ENCODE measurements at regions of chr3 and their contacts with region 1.

Region 1: DNA sequence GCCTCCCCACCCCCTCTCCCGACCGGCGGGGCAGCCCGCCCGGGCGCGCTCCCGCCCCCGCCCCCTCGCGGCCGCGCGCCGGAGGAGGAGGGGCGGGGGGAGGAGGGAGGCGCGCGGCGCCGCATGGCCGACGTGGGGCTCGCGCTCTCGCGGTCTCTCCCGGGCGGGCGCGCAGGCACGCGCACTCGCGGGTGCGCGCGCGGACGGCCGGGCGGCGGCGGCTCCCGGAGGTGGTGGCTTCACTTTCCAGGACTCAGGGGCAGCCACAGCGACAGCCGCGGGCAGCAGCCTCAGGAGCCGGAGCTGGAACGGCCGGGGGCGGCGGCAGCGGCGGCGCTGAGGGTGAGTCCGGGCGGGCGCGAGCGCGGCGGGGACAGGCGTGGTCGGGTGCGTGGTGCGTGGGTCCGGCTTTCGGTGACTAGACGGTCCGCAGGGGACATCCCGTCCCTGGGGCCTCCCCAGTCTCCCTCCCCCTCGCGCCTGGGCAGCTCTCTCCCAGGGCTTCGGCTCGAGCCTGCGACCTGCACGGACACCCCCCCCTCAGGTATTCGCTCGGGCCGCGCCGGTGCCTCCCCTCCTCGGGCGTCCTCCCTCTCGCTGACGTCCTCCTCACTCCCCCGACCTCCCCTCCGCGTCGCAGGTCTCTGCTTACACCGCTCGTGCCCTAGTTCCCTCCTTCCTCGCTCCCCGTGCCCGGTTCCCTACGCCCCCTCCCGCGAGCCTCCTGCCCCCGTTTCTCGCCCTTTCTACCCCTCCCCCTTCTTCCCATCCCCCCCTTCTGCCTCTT is at the start of gene UBE2E2:
- DNase-seq: peak; percentile 62
- H3K4me3 ChIP-seq: peak within 1 kb of the TSS; percentile 87 to 100 (median 96)
- H3K27ac ChIP-seq: peak within 1 kb of the TSS; percentile 81
- H3K4me1 ChIP-seq: peaks cover 12% of the 10 kb centered on the region
- H3K27me3 ChIP-seq: no peaks in the 10 kb centered on the region
- CTCF ChIP-seq: no peak
- total RNA-seq, gene UBE2E2: 37.3 to 47.9 TPM

Region 2: GRCh38 chr3:23405081-23405480 is 202.0 kb after region 1 on chr3:
- CTCF ChIA-PET with region 1: no interaction called
- dilution Hi-C with region 1: no loop called
- in situ Hi-C with region 1: no loop called
- intact Hi-C with region 1: no loop called
- DNase-seq: no peak
- H3K4me3 ChIP-seq: no peak overlapping the region
- H3K27ac ChIP-seq: no peak overlapping the region
- H3K4me1 ChIP-seq: no peaks in the 10 kb centered on the region
- H3K27me3 ChIP-seq: no peaks in the 10 kb centered on the region
- CTCF ChIP-seq: no peak

Region 3: DNA sequence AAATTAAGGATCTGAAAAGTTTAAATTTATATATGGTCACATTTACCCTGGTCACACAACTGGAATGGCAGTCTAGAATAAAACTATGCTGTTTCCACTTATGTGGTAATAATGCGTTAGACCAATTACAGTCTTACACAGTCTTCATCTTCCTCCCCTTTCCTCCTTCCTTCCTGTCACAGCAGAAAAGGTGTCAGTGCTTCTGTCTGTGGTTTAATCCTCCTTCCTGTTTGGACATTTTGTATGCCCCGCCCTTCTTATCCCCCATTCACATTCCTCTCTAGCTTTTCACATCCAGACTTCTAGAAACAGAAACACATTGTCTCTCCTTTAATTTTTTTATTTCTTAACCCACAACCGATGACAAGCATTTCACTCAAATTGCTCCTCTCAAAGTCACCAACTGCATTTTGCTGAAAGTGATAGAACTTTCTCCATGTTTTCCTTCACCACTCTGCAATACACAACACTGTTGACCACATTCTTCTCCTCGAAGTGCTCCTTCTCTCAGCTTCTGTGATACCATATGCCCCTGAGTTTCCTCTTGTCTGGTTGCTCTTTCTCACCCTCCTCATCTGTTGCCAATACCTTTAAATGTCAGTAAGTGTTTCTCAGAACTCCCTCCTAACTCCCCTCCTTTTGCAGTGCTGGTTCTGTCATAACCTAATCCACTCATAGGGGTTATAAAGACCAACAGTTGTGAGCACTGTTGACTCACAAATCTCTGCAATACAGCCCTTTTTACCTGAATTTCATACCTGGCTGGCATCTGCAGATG is 271.7 kb after region 1 on chr3:
- CTCF ChIA-PET with region 1: no interaction called
- dilution Hi-C with region 1: no loop called
- in situ Hi-C with region 1: no loop called
- intact Hi-C with region 1: no loop called
- DNase-seq: no peak
- H3K4me3 ChIP-seq: no peak overlapping the region
- H3K27ac ChIP-seq: no peak overlapping the region
- H3K4me1 ChIP-seq: peaks cover 11% of the 10 kb centered on the region
- H3K27me3 ChIP-seq: no peaks in the 10 kb centered on the region
- CTCF ChIP-seq: no peak

Region 4: GRCh38 chr3:23546181-23546580 is 343.1 kb after region 1 on chr3:
- CTCF ChIA-PET with region 1: no interaction called
- dilution Hi-C with region 1: no loop called
- in situ Hi-C with region 1: no loop called
- intact Hi-C with region 1: loop called (anchors 10 kb)
- DNase-seq: no peak
- H3K4me3 ChIP-seq: no peak overlapping the region
- H3K27ac ChIP-seq: no peak overlapping the region
- H3K4me1 ChIP-seq: peaks cover 18% of the 10 kb centered on the region
- H3K27me3 ChIP-seq: no peaks in the 10 kb centered on the region
- CTCF ChIP-seq: no peak

Measured in mammary epithelial cell (primary cell).